ENCODE measurements at regions of chr14 and their contacts with region 1.

Region 1: DNA sequence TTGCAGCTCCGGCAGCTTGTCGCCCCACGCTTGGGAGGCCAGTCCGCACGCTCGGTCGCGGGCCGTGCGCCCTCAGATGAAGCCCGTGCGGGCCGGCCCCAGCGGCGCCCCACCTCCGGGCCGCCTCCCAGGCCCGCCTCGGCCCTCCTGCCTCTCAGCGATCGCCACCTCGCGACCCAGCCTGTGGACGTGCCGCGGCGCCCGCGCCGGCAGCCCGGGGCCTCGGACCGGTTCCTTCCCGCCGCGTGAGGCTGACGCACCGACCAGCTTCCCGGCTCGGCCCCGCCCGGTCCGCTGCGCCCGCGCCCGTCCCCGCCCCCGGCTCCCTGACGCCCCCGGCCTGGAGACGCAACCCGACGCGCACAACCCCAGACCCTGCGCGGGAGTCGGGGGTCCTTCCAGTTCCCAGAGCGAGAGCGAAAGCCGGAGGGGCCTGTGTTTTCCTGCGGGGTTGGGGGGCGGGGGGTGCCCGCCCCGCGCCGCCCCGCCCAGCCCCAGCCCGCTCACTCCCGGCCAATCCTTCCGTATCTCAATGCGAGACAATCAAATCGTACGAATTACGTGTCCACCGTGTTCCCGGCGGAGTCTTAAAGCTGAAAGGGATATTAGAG is at the start of gene ERO1A:
- DNase-seq: peak; percentile 83
- H3K4me3 ChIP-seq: peak within 1 kb of the TSS; percentile 92
- H3K27ac ChIP-seq: peak within 1 kb of the TSS; percentile 99
- H3K4me1 ChIP-seq: no peaks in the 10 kb centered on the region
- H3K27me3 ChIP-seq: no peaks in the 10 kb centered on the region
- CTCF ChIP-seq: no peak
- total RNA-seq, gene ERO1A: 83.6 to 242 TPM

Region 2: DNA sequence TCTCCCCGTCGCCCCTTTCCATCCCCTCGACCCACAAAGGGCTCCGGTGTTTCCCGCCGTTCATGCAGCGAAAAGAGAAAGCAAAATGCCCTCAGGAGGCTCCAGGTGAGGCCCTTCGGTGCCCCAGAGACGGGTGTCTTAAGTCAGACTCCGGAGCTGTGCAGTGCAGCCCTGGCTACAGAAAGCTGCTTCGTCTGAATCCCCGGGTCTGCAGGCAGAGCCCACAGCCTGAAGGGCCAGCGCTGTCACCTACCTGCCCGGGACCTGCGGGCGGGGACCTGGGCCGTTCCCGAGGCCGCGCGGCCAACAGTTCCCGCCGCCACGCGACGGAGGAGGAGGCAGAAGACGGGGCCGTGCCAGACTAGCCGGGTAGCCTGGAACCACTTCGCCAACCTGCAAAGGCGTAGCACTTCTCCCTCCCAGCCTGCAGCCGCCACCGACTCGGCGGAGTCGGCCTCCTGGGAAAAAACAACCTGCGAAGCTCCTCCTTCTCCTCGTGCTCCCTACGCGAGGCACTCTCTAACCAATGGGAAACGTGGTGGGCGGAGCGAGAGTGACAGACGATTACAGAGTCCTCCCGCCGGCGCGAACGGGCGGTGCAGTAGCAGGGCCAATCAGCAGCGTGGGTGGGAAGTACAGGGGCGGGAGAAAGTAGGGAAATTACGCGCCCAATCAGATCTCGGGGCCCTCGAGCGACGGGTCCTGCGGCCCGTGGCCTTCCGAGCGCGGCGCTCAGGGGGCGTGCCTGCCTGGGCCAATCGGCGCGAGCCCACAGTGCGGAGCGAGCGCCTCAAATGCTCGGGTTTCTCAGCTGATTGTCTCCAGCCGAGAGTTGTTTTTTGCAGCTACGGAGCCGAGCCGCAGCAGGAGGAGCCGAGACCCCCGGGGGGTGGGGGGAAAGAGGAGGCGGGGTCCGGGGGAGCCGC is 143.3 kb before region 1 on chr14 and contains the starts of genes GPR137C and TXNDC16:
- intact Hi-C with region 1: loop called (anchors 10 kb)
- DNase-seq: peak; percentile 100
- H3K4me3 ChIP-seq: peak within 1 kb of the TSS; percentile 72
- H3K27ac ChIP-seq: peak within 1 kb of the TSS; percentile 90
- H3K4me1 ChIP-seq: peaks cover 4% of the 10 kb centered on the region
- H3K27me3 ChIP-seq: no peaks in the 10 kb centered on the region
- CTCF ChIP-seq: no peak
- total RNA-seq, gene GPR137C: 0.79 to 1.2 TPM
- total RNA-seq, gene TXNDC16: 7.8 to 10.6 TPM

Measured in colonic mucosa (tissue), 4 donors.